ENCODE measurements at regions of chr3 and their contacts with region 1.

Region 1: DNA sequence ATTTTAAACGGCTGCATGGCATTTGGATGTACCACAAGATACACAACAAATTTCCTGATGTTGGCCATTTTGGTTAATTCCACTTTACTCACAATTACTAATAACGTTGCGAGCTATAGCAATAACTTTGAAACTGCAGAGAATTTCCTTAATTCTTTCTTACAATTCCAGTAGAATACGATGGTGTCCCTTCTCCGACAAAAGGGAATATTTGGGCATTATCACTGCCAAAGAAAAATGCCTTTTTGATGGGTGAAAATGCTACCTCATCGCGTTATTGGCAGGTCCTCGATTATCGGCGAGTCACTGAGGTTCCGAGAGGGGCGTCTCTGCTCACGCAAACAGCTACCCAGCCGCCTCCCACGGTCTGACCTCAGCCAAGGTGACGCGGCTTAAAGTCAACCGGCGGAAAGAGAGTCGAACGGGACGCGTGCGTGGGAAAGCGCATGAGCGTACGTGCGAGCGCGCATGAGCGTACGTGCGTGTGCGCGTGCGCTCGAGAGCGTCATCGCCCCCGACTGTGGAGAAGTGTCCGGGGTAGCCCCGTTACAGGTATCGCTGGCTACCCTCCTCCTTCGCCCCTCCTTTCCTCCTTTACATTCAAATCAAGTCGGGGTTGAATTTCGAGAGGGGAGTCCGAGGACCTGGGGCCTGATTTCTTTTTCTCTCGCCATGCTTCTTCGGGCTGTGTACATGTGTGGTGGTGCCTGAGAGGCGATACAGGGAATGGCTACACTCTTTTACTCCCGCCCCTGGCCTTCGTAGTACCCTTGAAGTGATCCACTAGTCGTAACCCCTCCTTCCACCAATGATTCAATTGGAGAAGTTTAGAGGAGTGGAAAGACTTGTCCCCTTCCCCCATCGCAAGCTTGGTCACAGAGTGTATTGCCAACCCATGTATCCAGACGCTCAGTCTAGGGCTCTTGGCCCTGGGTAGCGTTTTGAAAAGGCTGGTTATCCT is at the start of gene OXSM:
- DNase-seq: peak; percentile 97
- ATAC-seq: peak; percentile 89
- H3K4me3 Mint-ChIP-seq: peak within 1 kb of the TSS; percentile 92
- H3K27ac Mint-ChIP-seq: peak within 1 kb of the TSS; percentile 99
- H3K4me1 Mint-ChIP-seq: peaks cover 49% of the 10 kb centered on the region
- H3K27me3 Mint-ChIP-seq: no peaks in the 10 kb centered on the region
- total RNA-seq, gene OXSM: 12.4 to 18.1 TPM

Region 2: DNA sequence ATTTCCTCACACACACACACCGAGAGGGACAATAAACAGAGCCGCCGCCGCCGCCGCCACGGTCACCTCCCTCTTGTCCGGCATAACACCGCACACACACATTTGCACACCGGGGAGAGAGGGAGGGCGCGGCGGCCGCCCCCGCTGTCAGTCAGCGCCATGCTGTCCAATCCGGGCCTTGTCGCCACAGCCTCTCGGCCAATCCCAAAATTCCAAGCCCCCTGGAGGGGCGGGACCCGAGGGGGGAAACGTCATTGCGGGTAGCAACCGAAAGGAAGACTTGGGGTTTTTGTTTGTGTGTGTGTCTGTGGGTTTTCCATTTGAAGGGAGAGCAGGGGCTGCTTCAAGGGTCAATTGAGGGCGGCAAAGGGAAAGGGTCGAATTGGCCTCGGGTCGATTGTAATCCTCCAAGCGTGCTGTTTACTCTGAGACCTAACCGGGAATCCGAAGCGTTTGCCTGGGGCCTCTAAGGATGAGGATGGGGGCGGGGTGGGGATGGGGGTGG is 125.0 kb before region 1 on chr3 and contains the start of gene TOP2B:
- CTCF ChIA-PET with region 1: interaction called, 3 read pairs
- POLR2A ChIA-PET with region 1: no interaction called
- intact Hi-C with region 1: loop called (anchors 1 to 2 kb)
- DNase-seq: peak; percentile 96
- ATAC-seq: peak; percentile 93
- H3K4me3 Mint-ChIP-seq: peak within 1 kb of the TSS; percentile 83
- H3K27ac Mint-ChIP-seq: peak within 1 kb of the TSS; percentile 100
- H3K4me1 Mint-ChIP-seq: peaks cover 44% of the 10 kb centered on the region
- H3K27me3 Mint-ChIP-seq: no peaks in the 10 kb centered on the region
- total RNA-seq, gene TOP2B: 132 to 156 TPM

Region 3: DNA sequence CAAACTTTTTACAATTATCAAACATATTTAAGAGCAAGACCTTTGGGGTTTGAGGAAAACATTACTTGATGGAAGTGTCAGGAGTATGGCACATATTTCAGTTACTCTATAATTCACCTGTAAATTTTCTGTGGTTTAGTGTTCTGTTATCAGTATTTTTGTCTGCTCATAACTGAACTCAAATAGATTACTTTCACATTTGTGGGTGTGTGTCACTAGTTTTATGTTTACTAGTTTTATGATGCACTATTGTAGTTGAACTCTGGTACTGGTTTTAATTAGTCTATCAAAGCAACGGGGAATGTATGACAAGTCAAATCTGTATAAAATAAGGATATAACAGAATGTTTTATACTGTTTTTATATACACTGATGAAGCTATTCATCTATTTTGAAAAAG is 27.2 kb after region 1 on chr3:
- CTCF ChIA-PET with region 1: no interaction called
- POLR2A ChIA-PET with region 1: no interaction called
- intact Hi-C with region 1: loop called in 1 of 2 experiments (anchors 2 kb)
- DNase-seq: no peak
- ATAC-seq: peak; percentile 82
- H3K4me3 Mint-ChIP-seq: no peak overlapping the region
- H3K27ac Mint-ChIP-seq: no peak overlapping the region
- H3K4me1 Mint-ChIP-seq: peaks cover 10% of the 10 kb centered on the region
- H3K27me3 Mint-ChIP-seq: no peaks in the 10 kb centered on the region

Region 4: GRCh38 chr3:26015752-26016151 is 225.9 kb after region 1 on chr3:
- CTCF ChIA-PET with region 1: no interaction called
- POLR2A ChIA-PET with region 1: no interaction called
- intact Hi-C with region 1: no loop called
- DNase-seq: peak; percentile 4
- ATAC-seq: no peak
- H3K4me3 Mint-ChIP-seq: no peak overlapping the region
- H3K27ac Mint-ChIP-seq: no peak overlapping the region
- H3K4me1 Mint-ChIP-seq: no peaks in the 10 kb centered on the region
- H3K27me3 Mint-ChIP-seq: peaks cover 1% of the 10 kb centered on the region